WTC11 (cell line): ENCODE measurements at regions of chr6 and their contacts with region 1.

Region 1: DNA sequence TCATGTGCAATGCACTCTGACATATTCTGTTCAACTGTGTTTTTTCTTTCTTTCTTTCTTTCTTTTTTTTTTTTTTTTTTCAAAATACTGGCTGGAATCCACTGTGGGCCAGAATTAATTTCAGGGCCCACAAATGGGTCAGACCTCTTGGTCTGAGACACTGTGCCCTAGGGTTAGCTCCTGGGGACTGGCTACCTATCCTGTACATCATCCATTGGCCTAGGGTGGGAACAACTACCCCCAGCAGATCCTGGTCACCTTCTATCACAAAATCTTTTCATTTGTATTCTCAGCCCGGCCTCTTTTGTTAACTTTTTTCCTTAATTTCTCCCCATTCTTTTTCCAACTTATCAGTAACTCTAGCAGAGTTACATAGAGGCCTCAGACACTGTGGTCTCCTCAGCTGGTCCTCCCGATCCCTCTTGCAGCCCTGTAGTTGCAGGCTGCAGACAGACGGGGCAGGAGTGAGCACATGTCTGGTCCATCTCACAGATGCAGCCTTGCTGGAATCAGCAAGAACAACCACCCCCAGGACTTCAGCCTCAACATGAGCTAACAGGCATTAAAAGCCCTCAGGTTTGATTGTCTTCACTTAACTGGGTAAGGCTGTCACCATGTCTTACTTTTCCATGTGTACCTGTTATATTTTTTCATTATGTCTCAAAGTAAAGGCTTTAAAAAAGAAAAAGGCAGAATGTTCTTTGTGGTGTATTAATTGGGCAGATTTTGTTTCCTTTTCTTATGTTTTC is 41.3 kb downstream of the TXLNB start:
- DNase-seq: peak; percentile 79
- ATAC-seq: peak; percentile 100
- H3K4me3 Mint-ChIP-seq: no peak overlapping the region
- H3K27ac Mint-ChIP-seq: no peak overlapping the region
- H3K4me1 Mint-ChIP-seq: no peaks in the 10 kb centered on the region
- H3K27me3 Mint-ChIP-seq: no peaks in the 10 kb centered on the region
- CTCF ChIP-seq: peak; percentile 57

Region 2: GRCh38 chr6:139230391-139230840 is 20.1 kb before region 1 on chr6:
- CTCF ChIA-PET with region 1: interaction called, 15 read pairs
- POLR2A ChIA-PET with region 1: no interaction called
- DNase-seq: no peak
- ATAC-seq: peak; percentile 82
- H3K4me3 Mint-ChIP-seq: no peak overlapping the region
- H3K27ac Mint-ChIP-seq: no peak overlapping the region; the same call in 1 of the 2 replicates
- H3K4me1 Mint-ChIP-seq: peaks cover 6% of the 10 kb centered on the region; the same call in 1 of the 2 replicates
- H3K27me3 Mint-ChIP-seq: peaks cover 6% of the 10 kb centered on the region
- CTCF ChIP-seq: no peak

Region 3: DNA sequence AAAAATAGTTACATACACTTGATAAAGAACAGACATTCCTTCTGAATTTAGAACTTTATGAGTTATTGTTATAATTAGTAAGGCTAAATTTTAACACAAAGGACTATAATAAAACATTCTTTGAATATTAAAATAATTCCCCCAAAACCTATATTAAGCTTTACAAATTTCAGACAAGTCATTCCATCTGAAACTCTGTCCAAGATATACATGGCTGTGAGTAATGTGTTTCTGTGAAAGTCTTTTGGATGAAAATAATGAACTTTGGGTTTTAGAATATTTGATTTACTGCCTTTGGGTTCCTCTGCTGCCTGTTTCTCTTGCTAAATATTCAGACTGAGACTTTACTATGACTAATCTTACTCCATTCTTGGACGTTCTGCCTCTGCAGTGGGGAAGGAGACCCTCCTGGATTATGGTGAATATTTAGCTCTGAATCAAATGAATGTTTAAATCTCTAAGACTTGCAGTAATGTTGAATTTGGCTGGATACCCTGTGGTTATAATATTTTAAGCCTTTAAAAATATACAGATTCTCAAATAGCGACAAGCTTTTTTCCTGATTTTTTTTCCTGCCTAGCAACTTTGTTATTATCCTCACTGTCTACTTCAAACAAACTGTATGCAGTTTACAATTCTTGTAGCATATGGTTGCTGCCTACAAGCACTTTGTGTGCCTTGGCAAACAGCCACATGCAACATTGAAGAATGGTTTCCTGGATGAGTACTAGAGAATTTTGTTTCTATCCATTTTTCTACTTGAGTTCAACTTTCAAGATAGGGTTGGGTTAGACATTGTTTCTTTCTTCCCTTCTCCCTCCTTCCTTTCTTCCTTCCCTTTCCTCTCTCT is 10.1 kb before region 1 on chr6:
- CTCF ChIA-PET with region 1: interaction called, 13 read pairs
- POLR2A ChIA-PET with region 1: no interaction called
- DNase-seq: no peak
- ATAC-seq: no peak
- H3K4me3 Mint-ChIP-seq: no peak overlapping the region
- H3K27ac Mint-ChIP-seq: no peak overlapping the region
- H3K4me1 Mint-ChIP-seq: peaks cover 11% of the 10 kb centered on the region
- H3K27me3 Mint-ChIP-seq: no peaks in the 10 kb centered on the region; the same call in 1 of the 2 replicates
- CTCF ChIP-seq: no peak

Region 4: GRCh38 chr6:139262519-139263300 is 12.2 kb after region 1 on chr6:
- CTCF ChIA-PET with region 1: interaction called, 14 read pairs
- POLR2A ChIA-PET with region 1: no interaction called
- DNase-seq: no peak
- ATAC-seq: no peak
- H3K4me3 Mint-ChIP-seq: no peak overlapping the region
- H3K27ac Mint-ChIP-seq: peak overlapping the region; percentile 53
- H3K4me1 Mint-ChIP-seq: peaks cover 5% of the 10 kb centered on the region; the same call in 1 of the 2 replicates
- H3K27me3 Mint-ChIP-seq: no peaks in the 10 kb centered on the region
- CTCF ChIP-seq: no peak

Region 5: GRCh38 chr6:139355172-139355571 is 104.7 kb after region 1 on chr6:
- CTCF ChIA-PET with region 1: interaction called, 13 read pairs
- POLR2A ChIA-PET with region 1: no interaction called
- DNase-seq: no peak
- ATAC-seq: no peak
- H3K4me3 Mint-ChIP-seq: no peak overlapping the region
- H3K27ac Mint-ChIP-seq: no peak overlapping the region
- H3K4me1 Mint-ChIP-seq: no peaks in the 10 kb centered on the region
- H3K27me3 Mint-ChIP-seq: no peaks in the 10 kb centered on the region
- CTCF ChIP-seq: no peak

Region 6: GRCh38 chr6:139364302-139364981 is 114.0 kb after region 1 on chr6:
- CTCF ChIA-PET with region 1: interaction called, 20 read pairs
- POLR2A ChIA-PET with region 1: no interaction called
- DNase-seq: no peak
- ATAC-seq: no peak
- H3K4me3 Mint-ChIP-seq: no peak overlapping the region
- H3K27ac Mint-ChIP-seq: 0 out of 2 replicates have a peak overlapping the region, but pooled peaks have one; percentile 16
- H3K4me1 Mint-ChIP-seq: peaks cover 47% of the 10 kb centered on the region
- H3K27me3 Mint-ChIP-seq: no peaks in the 10 kb centered on the region
- CTCF ChIP-seq: peak; percentile 49; the same call in 1 of the 2 replicates